Panc1 (cell line): ENCODE measurements at regions of chr14 and their contacts with region 1.

Region 1: DNA sequence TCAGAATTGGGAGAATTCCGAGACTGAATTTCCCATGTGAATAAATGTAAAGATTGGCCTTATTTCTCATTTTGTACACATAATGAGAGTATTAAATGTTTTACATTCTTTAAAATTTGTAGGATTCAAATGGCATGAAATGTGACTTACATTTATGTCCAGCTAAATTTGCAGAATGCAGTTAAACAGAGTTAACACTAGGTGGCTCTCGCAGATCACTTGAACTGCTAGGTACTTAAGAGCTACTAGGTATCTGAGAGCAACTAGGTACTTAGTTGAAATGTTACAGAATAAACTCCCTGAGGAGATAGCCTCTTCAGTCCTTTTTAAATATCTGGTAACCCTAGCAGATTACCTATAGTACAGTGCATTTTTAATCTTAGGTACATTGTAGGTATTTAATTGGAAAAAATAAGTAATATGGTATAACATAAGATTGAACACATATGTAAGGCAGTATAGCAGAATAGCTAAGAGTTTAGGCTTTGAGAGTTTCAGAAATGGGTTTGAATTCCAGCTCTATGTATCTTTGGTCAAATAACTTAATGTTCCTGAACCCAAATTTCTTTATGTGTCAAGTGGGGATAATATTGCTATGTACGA is 73.8 kb downstream of the KIAA0586 start:
- DNase-seq: peak; percentile 45
- ATAC-seq: no peak; the same call in 1 of the 2 replicates
- H3K4me3 ChIP-seq: no peak overlapping the region
- H3K27ac ChIP-seq: no peak overlapping the region
- H3K4me1 ChIP-seq: no peaks in the 10 kb centered on the region
- H3K27me3 ChIP-seq: no peaks in the 10 kb centered on the region
- CTCF ChIP-seq: peak; percentile 75; the same call in 1 of the 2 replicates

Region 2: GRCh38 chr14:58637391-58638230 is 136.3 kb after region 1 on chr14 and contains the start of gene DACT1:
- CTCF ChIA-PET with region 1: interaction called, 3 read pairs
- POLR2A ChIA-PET with region 1: no interaction called
- in situ Hi-C with region 1: no loop called
- intact Hi-C with region 1: loop called (anchors 2 kb)
- DNase-seq: no peak
- ATAC-seq: peak; percentile 78
- H3K4me3 ChIP-seq: peak within 1 kb of the TSS; percentile 49 to 67
- H3K27ac ChIP-seq: no peak within 1 kb of the TSS
- H3K4me1 ChIP-seq: no peaks in the 10 kb centered on the region
- H3K27me3 ChIP-seq: peaks cover 20% of the 10 kb centered on the region
- CTCF ChIP-seq: no peak
- total RNA-seq, gene DACT1: 0.15 TPM

Region 3: DNA sequence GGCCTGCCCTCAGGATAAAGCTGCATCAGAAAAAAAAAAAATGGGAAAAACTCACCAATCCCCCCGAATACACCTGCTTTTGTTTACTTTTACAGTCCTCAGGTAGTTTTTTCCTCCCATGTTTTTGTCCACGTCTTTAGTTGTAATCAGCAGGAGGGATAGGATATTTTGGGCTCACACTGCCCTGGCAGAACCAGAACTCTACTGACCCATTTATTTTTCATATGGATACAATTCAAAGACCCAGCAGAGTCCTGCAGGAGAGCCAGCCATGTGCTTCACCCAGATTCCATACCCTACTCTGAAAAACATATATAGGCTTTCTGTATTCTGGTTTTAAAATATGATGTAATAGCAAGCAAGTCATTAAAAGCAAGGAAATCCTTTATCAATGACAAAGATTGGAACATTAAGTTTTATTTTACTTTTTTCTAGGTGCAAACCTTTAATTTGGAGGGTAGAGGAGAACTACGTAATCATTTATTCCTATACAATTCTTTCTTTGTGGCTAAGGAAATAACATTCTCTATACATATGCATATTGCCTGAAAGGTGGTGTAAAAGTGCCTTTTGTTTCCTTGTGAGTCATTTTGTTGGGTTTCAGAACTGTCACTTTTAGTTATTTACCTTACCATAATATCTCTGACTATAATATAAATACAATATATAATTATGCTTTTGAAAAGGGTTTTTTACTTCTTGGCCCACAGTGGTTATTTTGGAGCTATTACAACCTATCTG is 155.5 kb after region 1 on chr14:
- CTCF ChIA-PET with region 1: no interaction called
- POLR2A ChIA-PET with region 1: no interaction called
- in situ Hi-C with region 1: no loop called
- intact Hi-C with region 1: no loop called
- DNase-seq: no peak
- ATAC-seq: no peak
- H3K4me3 ChIP-seq: no peak overlapping the region
- H3K27ac ChIP-seq: no peak overlapping the region
- H3K4me1 ChIP-seq: no peaks in the 10 kb centered on the region
- H3K27me3 ChIP-seq: no peaks in the 10 kb centered on the region
- CTCF ChIP-seq: no peak

Region 4: DNA sequence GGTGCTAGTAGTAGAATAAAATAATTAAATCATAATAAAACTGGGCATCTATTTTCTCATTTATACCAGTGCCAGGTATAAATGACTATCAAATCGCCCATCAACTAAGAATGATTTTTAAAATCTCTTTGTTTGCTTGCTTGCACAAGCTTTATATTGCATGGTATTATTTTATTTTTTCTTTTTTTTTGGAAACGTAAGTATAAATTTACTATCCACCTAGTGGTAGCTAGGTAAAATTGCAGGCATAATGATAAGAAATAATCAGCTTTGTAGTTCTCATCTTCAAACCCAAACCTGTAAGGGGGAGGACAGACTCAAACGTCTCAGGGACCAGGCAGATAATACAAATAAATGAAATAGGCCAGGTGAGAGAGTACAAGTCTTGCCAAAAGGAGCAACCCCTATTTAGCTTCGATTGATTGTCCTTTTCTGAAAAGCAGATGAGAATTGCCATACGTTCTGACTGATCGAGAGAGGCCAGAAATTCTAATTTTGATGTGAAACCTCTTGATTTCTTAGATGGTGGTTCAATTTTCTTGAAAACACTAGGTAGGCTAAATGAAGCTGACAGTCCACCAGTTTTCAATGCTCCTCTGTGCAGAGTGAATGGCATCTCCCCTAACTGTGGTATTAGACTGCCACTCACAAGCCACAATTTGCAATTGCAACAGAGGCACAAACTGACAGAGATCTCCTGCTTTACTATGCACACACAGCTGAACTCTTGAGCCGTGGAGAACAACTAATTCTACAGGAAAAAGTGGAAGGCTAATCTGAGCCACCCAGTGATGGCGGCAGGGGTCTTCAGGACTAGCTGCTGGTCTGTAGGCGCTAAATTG is 325.8 kb after region 1 on chr14:
- CTCF ChIA-PET with region 1: no interaction called
- POLR2A ChIA-PET with region 1: no interaction called
- in situ Hi-C with region 1: no loop called
- intact Hi-C with region 1: loop called (anchors 5 kb)
- DNase-seq: no peak
- ATAC-seq: no peak
- H3K4me3 ChIP-seq: no peak overlapping the region
- H3K27ac ChIP-seq: no peak overlapping the region
- H3K4me1 ChIP-seq: no peaks in the 10 kb centered on the region
- H3K27me3 ChIP-seq: no peaks in the 10 kb centered on the region
- CTCF ChIP-seq: peak; percentile 36; the same call in 1 of the 2 replicates

Region 5: GRCh38 chr14:59055439-59056045 is 554.2 kb after region 1 on chr14:
- CTCF ChIA-PET with region 1: interaction called, 4 read pairs
- POLR2A ChIA-PET with region 1: no interaction called
- in situ Hi-C with region 1: no loop called
- intact Hi-C with region 1: loop called (anchors 1 kb)
- DNase-seq: peak; percentile 24
- ATAC-seq: 0 out of 2 replicates have a peak, but pooled peaks have one; percentile 70
- H3K4me3 ChIP-seq: no peak overlapping the region
- H3K27ac ChIP-seq: no peak overlapping the region
- H3K4me1 ChIP-seq: no peaks in the 10 kb centered on the region
- H3K27me3 ChIP-seq: no peaks in the 10 kb centered on the region
- CTCF ChIP-seq: peak; percentile 70; the same call in 1 of the 2 replicates

Region 6: DNA sequence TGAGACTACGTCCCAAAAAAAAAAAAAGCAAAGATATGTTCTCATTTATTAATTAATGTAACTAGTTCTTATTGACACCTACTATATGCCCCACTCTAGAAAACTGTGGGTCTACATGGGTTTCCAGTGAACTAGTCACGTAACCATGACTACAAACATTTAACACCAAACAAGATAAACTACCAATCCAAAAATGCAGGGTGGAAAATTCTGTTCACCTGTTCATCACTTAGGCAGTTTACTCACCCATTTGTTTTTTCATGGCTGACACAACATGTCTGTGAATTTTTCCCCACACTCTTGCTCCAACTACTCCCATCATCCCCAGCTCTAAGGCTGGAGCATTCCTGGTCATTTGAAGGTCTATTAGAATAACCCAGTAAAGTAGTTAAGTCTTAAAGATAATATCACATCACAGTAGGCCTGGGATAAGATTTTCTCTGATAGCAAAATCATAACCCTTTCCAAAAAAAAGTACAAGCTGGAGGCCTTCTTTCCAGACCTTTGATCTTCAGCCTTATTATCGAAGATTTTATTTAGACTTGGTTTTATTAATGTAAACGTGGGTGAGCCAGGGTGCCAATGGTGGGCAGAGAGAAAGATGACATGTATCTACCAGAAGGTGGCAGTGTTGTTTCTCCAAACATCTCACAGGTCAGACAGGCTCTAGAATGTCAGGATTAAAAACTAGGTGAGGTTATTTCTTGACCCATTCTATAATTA is 625.6 kb after region 1 on chr14:
- CTCF ChIA-PET with region 1: no interaction called
- POLR2A ChIA-PET with region 1: no interaction called
- in situ Hi-C with region 1: no loop called
- intact Hi-C with region 1: loop called (anchors 5 kb)
- DNase-seq: peak; percentile 30
- ATAC-seq: peak; percentile 89
- H3K4me3 ChIP-seq: no peak overlapping the region
- H3K27ac ChIP-seq: no peak overlapping the region
- H3K4me1 ChIP-seq: no peaks in the 10 kb centered on the region
- H3K27me3 ChIP-seq: peaks cover 4% of the 10 kb centered on the region; the same call in 1 of the 2 replicates
- CTCF ChIP-seq: peak; percentile 66; the same call in 1 of the 2 replicates